Activated CD4-positive, alpha-beta T cell treated with anti-CD3 and anti-CD28 coated beads, Interleukin-2, amount 10 ng/mL, durations not matched to agents 7 days and 5 days (primary cell): ENCODE measurements at regions of chr6 and their contacts with region 1.

Region 1: DNA sequence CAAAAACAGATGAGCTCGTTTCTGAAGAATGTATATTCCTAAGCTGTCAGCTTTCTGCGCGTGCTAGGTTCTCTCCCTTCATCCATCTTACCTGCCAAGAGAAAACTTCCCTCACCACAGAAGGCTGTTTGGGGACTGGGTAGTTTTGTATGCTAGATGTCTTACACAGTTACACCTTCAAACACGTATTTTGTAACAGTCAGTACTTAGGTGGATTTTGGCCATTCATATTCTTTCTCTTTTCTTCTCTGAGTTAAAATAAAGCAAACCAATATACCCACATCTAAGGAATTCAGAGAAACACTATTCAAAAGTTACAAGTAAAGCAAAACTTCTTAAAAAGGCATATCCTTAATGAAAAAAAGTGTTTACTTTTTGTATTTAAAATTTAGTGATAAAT is 35.6 kb upstream of the PRDM1 start:
- DNase-seq: no peak
- H3K4me3 Mint-ChIP-seq: no peak overlapping the region
- H3K27ac Mint-ChIP-seq: no peak overlapping the region
- H3K4me1 Mint-ChIP-seq: peaks cover 22% of the 10 kb centered on the region
- H3K27me3 Mint-ChIP-seq: peaks cover 4% of the 10 kb centered on the region

Region 2: GRCh38 chr6:106118835-106119431 is 68.4 kb after region 1 on chr6:
- CTCF ChIA-PET with region 1: no interaction called
- POLR2A ChIA-PET with region 1: interaction called, 10 read pairs
- DNase-seq: no peak
- H3K4me3 Mint-ChIP-seq: no peak overlapping the region
- H3K27ac Mint-ChIP-seq: no peak overlapping the region
- H3K4me1 Mint-ChIP-seq: peaks cover 73% of the 10 kb centered on the region
- H3K27me3 Mint-ChIP-seq: peaks cover 13% of the 10 kb centered on the region